ENCODE measurements at regions of chr15 and their contacts with region 1.

Region 1: GRCh38 chr15:76235186-76235826 is 76.0 kb downstream of the ETFA start:
- DNase-seq: no peak
- ATAC-seq: peak; percentile 52
- H3K4me3 Mint-ChIP-seq: no peak overlapping the region
- H3K27ac Mint-ChIP-seq: no peak overlapping the region
- H3K4me1 Mint-ChIP-seq: no peaks in the 10 kb centered on the region
- H3K27me3 Mint-ChIP-seq: no peaks in the 10 kb centered on the region
- CTCF ChIP-seq: no peak

Region 2: DNA sequence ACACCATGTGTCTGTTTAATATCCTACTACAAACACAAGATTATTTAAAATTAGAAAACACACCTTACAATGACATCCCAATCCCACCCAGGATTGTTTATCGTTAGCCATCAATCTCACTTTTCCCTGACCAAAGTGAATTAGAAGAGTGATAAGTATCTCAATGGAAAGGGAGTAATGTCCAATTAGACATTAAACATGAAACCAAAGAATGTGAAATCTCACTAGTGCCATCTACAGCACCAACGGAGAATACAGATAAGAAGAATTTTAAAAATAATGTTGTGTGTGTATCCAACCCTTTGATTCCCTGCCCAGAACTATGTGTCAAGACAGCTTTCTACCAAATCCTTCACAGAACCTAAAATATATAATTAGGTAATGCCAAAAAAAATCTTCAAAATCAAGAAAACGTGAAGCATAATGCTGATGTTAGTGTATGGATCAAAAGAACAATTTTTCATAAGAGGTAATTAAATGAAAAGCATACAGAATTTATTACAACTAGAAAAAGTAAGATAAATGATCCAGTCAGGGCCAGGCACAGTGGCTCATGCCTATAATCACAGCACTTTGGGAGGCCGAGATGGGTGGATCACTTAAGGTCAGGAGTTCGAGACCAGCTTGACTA is 605.6 kb after region 1 on chr15:
- CTCF ChIA-PET with region 1: interaction called, 5 read pairs
- POLR2A ChIA-PET with region 1: no interaction called
- intact Hi-C with region 1: loop called (anchors 1 kb)
- DNase-seq: no peak
- ATAC-seq: no peak
- H3K4me3 Mint-ChIP-seq: no peak overlapping the region
- H3K27ac Mint-ChIP-seq: no peak overlapping the region
- H3K4me1 Mint-ChIP-seq: peaks cover 30% of the 10 kb centered on the region
- H3K27me3 Mint-ChIP-seq: no peaks in the 10 kb centered on the region
- CTCF ChIP-seq: no peak

Region 3: GRCh38 chr15:76866716-76867321 is 631.5 kb after region 1 on chr15:
- CTCF ChIA-PET with region 1: interaction called, 8 read pairs
- POLR2A ChIA-PET with region 1: no interaction called
- intact Hi-C with region 1: loop called (anchors 1 kb)
- DNase-seq: no peak
- ATAC-seq: no peak
- H3K4me3 Mint-ChIP-seq: no peak overlapping the region
- H3K27ac Mint-ChIP-seq: no peak overlapping the region
- H3K4me1 Mint-ChIP-seq: peaks cover 16% of the 10 kb centered on the region
- H3K27me3 Mint-ChIP-seq: no peaks in the 10 kb centered on the region
- CTCF ChIP-seq: no peak

Measured in activated B cell treated with CpG ODN at 0.5 μM for 24 hours (primary cell).